ENCODE measurements at regions of chr14 and their contacts with region 1.

Region 1: DNA sequence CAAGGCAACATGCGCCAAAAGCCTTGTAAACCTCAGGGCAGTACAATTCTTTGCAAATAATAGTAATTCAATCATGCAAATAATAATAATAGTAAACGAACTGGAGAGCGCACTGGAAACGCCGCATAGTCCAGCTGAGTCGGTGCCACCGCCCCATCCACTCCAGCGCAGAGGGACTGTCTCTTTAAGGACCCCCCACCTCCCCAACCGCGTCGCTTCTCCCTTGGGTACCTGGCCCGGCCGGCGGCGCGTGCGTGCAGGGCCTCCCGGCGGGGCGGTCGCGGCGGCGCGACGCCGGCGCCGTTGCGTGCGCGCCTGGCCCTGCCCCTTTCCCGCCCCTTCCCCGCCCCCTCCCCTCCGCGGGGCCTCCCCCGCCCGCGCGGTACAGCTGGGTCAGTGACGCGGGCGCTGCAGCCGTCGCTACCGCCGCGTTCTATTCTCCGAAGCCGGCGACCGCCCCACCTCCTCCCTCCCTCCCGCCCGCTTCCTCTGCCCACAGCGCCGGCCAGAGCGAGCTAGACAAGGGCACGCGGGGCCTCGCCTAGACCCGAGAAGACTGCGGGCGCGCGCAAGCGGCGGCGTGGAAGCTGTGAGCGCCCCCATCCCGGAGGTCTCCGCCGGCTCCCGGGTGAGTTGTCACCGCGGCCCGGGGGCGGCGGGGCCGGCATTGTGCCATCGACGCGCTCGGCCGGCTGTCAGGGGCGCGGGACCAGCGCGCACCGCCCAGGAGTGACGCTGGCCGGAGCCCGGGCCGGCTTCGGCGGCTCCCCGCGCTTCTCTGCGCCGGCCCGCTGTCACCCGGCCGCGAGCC is at the start of gene SUSD6:
- DNase-seq: peak; percentile 85 to 91 (median 87)
- H3K4me3 ChIP-seq: peak within 1 kb of the TSS; percentile 80 to 84
- H3K4me3 Mint-ChIP-seq: peak within 1 kb of the TSS; percentile 91 to 99 (median 97)
- H3K27ac ChIP-seq: peak within 1 kb of the TSS; percentile 83
- H3K27ac Mint-ChIP-seq: peak within 1 kb of the TSS; percentile 96 to 100 (median 100)
- H3K4me1 ChIP-seq: peaks cover 56% of the 10 kb centered on the region
- H3K4me1 Mint-ChIP-seq: peaks cover 40 to 64% (median 53%) of the 10 kb centered on the region in 4 donors
- H3K27me3 ChIP-seq: no peaks in the 10 kb centered on the region
- H3K27me3 Mint-ChIP-seq: no peaks in the 10 kb centered on the region
- total RNA-seq, gene SUSD6: 61.5 to 62.0 TPM

Region 2: DNA sequence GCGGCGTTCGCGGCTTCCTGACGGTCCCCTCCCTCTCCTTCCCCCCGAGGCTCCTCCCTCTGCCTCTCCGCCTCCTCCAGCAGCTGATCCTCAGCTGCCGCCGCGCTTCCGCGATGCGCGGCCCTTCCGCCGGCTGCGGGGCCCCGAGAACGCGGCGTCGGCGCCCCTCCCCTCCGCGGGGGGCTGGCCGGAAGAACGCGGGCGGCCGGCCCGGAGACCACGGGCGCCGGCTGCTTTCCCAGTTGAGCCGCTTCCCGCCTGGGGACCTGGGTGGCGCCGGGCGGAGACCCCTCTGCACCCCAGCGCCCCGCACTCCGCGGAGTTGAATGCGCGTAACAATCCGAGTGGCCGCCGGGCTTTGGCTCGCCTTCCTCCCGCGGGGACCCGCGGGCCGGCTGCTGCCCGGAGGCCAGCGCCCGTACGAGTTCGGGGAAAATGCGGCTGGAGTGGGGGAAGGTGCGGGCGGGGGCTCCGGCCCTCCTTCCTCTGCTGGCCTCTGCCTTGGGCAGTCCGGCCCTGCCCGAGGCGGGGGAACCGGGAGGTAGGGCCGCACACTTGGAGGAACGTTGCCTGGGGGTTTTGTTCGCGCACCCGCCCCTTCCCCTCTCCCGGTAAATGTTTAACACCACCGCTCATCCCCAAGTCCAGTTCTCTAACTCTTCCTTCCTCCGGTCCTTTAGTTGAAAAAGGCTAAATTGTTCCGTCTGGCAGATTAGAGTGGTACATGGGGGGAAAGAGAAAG is 458.1 kb before region 1 on chr14:
- CTCF ChIA-PET with region 1: no interaction called
- POLR2A ChIA-PET with region 1: no interaction called
- intact Hi-C with region 1: loop called (anchors 5 kb)
- DNase-seq: peak; percentile 89 to 97 (median 94)
- H3K4me3 ChIP-seq: peak overlapping the region; percentile 32 to 94
- H3K4me3 Mint-ChIP-seq: peak overlapping the region; percentile 94 to 100 (median 97)
- H3K27ac ChIP-seq: peak overlapping the region; percentile 75
- H3K27ac Mint-ChIP-seq: peak overlapping the region; percentile 91 to 97 (median 93)
- H3K4me1 ChIP-seq: peaks cover 38% of the 10 kb centered on the region
- H3K4me1 Mint-ChIP-seq: peaks cover 22 to 45% (median 32%) of the 10 kb centered on the region in 4 donors
- H3K27me3 ChIP-seq: no peaks in the 10 kb centered on the region
- H3K27me3 Mint-ChIP-seq: peaks cover 0 to 2% of the 10 kb centered on the region in 2 donors

Region 3: GRCh38 chr14:69532566-69533340 is 78.7 kb before region 1 on chr14:
- CTCF ChIA-PET with region 1: no interaction called
- POLR2A ChIA-PET with region 1: no interaction called
- intact Hi-C with region 1: no loop called
- DNase-seq: no peak
- H3K4me3 ChIP-seq: no peak overlapping the region
- H3K4me3 Mint-ChIP-seq: no peak overlapping the region
- H3K27ac ChIP-seq: no peak overlapping the region
- H3K27ac Mint-ChIP-seq: no peak overlapping the region
- H3K4me1 ChIP-seq: no peaks in the 10 kb centered on the region
- H3K4me1 Mint-ChIP-seq: peaks cover 0 to 5% (median 0%) of the 10 kb centered on the region in 4 donors
- H3K27me3 ChIP-seq: no peaks in the 10 kb centered on the region
- H3K27me3 Mint-ChIP-seq: peaks cover 5 to 16% of the 10 kb centered on the region in 2 donors

Region 4: DNA sequence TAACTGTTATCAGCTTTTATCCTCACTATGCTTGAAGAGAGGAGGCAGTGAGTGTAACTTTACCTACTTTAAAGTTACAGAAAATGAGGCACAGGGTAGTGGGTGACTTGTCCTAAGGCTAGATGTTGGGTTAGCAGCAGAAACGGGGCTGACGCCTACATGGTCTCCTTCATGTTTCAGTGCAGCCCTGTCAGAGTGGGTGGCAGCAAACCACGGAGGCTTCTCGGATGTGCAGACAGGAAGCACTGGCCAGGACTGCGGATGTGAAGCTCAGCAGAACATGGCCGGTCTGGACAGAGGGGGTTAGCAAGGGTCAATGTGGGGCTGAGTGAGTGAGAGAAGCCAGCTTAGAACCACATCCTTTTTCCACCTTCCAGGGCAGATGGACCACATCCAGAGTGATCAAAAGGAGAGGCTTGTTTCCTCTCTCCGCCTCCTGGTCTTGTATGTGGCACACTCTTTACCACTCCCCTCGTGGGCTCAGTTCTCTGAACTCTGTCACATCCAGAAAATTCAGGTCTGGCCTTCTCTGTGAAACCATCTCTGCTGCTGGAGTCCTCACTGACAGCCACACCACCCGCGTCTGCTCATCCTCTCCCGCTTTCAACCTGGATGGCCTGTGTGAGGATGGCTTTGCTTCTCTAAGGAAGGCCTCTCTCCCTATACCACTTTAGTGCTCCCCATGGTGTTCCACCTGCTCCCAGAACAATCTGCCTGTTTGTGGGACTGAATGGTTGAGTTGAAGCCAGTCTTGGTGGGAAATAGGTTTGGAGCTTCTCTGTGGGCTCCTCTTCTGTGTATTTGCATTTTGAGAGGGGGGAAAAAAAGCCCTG is 14.1 kb after region 1 on chr14:
- CTCF ChIA-PET with region 1: interaction called, 11 read pairs
- POLR2A ChIA-PET with region 1: interaction called, 279 read pairs
- intact Hi-C with region 1: loop called (anchors 1 kb)
- DNase-seq: peak; percentile 71 to 88 (median 75)
- H3K4me3 ChIP-seq: peak overlapping the region; percentile 8 to 21
- H3K4me3 Mint-ChIP-seq: peak overlapping the region; percentile 70 to 88 (median 78)
- H3K27ac ChIP-seq: peak overlapping the region; percentile 52
- H3K27ac Mint-ChIP-seq: peak overlapping the region; percentile 84 to 96 (median 91)
- H3K4me1 ChIP-seq: peaks cover 98% of the 10 kb centered on the region
- H3K4me1 Mint-ChIP-seq: peaks cover 68 to 96% (median 87%) of the 10 kb centered on the region in 4 donors
- H3K27me3 ChIP-seq: no peaks in the 10 kb centered on the region
- H3K27me3 Mint-ChIP-seq: no peaks in the 10 kb centered on the region

Region 5: GRCh38 chr14:69667938-69668335 is 56.5 kb after region 1 on chr14:
- CTCF ChIA-PET with region 1: interaction called, 12 read pairs
- POLR2A ChIA-PET with region 1: interaction called, 99 read pairs
- intact Hi-C with region 1: loop called (anchors 2 kb)
- DNase-seq: no peak
- H3K4me3 ChIP-seq: peak overlapping the region in 1 of 2 donors; percentile 23
- H3K4me3 Mint-ChIP-seq: peak overlapping the region; percentile 57 to 83 (median 70)
- H3K27ac ChIP-seq: peak overlapping the region; percentile 40
- H3K27ac Mint-ChIP-seq: peak overlapping the region; percentile 57 to 93 (median 83)
- H3K4me1 ChIP-seq: peaks cover 95% of the 10 kb centered on the region
- H3K4me1 Mint-ChIP-seq: peaks cover 74 to 98% (median 87%) of the 10 kb centered on the region in 4 donors
- H3K27me3 ChIP-seq: no peaks in the 10 kb centered on the region
- H3K27me3 Mint-ChIP-seq: no peaks in the 10 kb centered on the region

Region 6: GRCh38 chr14:69685716-69686115 is 74.3 kb after region 1 on chr14:
- CTCF ChIA-PET with region 1: interaction called, 3 read pairs
- POLR2A ChIA-PET with region 1: interaction called, 19 read pairs
- intact Hi-C with region 1: loop called (anchors 2 kb)
- DNase-seq: no peak
- H3K4me3 ChIP-seq: no peak overlapping the region
- H3K4me3 Mint-ChIP-seq: peak overlapping the region in 7 of 8 donors; percentile 11 to 74 (median 57)
- H3K27ac ChIP-seq: peak overlapping the region; percentile 20
- H3K27ac Mint-ChIP-seq: peak overlapping the region in 6 of 7 donors; percentile 17 to 89 (median 71)
- H3K4me1 ChIP-seq: peaks cover 72% of the 10 kb centered on the region
- H3K4me1 Mint-ChIP-seq: peaks cover 64 to 94% (median 81%) of the 10 kb centered on the region in 4 donors
- H3K27me3 ChIP-seq: no peaks in the 10 kb centered on the region
- H3K27me3 Mint-ChIP-seq: no peaks in the 10 kb centered on the region

Region 7: DNA sequence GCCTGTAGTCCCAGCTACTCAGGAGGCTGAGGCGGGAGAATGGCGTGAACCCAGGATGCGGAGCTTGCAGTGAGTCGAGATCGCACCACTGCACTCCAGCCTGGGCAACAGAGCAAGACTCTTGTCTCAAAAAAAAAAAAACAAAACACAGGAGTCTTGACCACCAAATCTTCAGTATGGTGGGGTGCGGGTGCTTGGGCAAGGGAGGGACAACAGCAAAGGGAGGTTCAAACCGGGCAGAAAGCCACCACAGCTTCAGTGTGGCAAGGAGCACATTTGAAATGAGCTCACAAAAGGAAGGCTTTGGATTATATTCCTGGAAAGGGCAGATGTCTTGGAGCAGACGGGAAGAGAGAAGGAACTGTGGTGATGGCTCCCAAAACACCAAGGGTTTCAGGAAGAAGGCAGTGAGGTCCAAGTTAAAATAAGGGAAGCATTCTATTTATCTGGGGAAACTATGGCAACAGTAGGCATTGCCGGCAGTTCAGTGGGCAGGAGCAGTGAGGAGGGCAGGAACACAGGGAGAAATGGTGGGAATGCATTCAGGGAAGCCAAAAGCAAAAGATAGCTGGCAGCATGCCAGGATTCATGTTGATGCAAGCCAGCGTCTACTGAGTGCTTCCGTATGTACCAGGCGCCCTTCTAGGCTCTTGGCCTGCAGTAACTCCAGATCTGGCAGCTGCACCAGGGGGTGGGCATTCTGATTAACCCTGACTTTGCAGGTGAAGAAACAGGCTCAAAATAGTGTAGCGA is 104.5 kb after region 1 on chr14:
- CTCF ChIA-PET with region 1: interaction called, 30 read pairs
- POLR2A ChIA-PET with region 1: interaction called, 8 read pairs
- intact Hi-C with region 1: no loop called
- DNase-seq: peak in 1 of 5 donors; percentile 42
- H3K4me3 ChIP-seq: no peak overlapping the region
- H3K4me3 Mint-ChIP-seq: peak overlapping the region in 5 of 8 donors; percentile 5 to 51 (median 21)
- H3K27ac ChIP-seq: no peak overlapping the region
- H3K27ac Mint-ChIP-seq: peak overlapping the region; percentile 38 to 85 (median 77)
- H3K4me1 ChIP-seq: peaks cover 33% of the 10 kb centered on the region
- H3K4me1 Mint-ChIP-seq: peaks cover 27 to 62% (median 47%) of the 10 kb centered on the region in 4 donors
- H3K27me3 ChIP-seq: no peaks in the 10 kb centered on the region
- H3K27me3 Mint-ChIP-seq: no peaks in the 10 kb centered on the region

Region 8: DNA sequence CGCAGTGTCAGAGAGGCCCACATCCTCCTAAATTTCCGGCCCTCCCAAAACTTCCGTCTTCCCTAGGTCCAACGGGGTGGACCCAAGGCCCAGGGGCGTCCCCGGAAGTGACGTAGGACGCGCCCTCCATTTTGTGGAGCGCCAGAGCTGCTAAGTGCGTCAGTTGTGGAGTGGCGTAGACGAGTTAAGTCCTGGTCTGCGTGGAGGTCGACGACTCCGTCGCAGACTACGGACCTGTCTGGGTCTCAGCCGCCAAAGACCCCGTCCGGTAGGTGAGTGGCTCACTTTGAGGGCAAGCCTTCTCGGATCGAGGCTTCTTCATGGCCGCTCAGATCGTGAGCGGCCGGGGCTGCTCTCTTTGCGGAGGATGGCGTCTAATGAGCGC is 155.6 kb after region 1 on chr14 and contains the start of gene SRSF5:
- CTCF ChIA-PET with region 1: interaction called, 7 read pairs
- POLR2A ChIA-PET with region 1: interaction called, 78 read pairs
- intact Hi-C with region 1: loop called (anchors 1 kb)
- DNase-seq: peak; percentile 92 to 95 (median 94)
- H3K4me3 ChIP-seq: peak within 1 kb of the TSS; percentile 83 to 95
- H3K4me3 Mint-ChIP-seq: peak within 1 kb of the TSS; percentile 98 to 100 (median 100)
- H3K27ac ChIP-seq: peak within 1 kb of the TSS; percentile 100
- H3K27ac Mint-ChIP-seq: peak within 1 kb of the TSS; percentile 100
- H3K4me1 ChIP-seq: peaks cover 48% of the 10 kb centered on the region
- H3K4me1 Mint-ChIP-seq: peaks cover 41 to 79% (median 57%) of the 10 kb centered on the region in 4 donors
- H3K27me3 ChIP-seq: no peaks in the 10 kb centered on the region
- H3K27me3 Mint-ChIP-seq: no peaks in the 10 kb centered on the region
- total RNA-seq, gene SRSF5: 946 to 964 TPM